PC-9 (cell line): ENCODE measurements at regions of chr9 and their contacts with region 1.

Region 1: GRCh38 chr9:124174433-124174832 is 83.3 kb upstream of the NEK6 start:
- DNase-seq: no peak
- H3K4me3 ChIP-seq: no peak overlapping the region
- H3K27ac ChIP-seq: no peak overlapping the region
- H3K4me1 ChIP-seq: no peaks in the 10 kb centered on the region
- H3K27me3 ChIP-seq: peaks cover 14% of the 10 kb centered on the region; the same call in 1 of the 2 replicates
- CTCF ChIP-seq: no peak

Region 2: DNA sequence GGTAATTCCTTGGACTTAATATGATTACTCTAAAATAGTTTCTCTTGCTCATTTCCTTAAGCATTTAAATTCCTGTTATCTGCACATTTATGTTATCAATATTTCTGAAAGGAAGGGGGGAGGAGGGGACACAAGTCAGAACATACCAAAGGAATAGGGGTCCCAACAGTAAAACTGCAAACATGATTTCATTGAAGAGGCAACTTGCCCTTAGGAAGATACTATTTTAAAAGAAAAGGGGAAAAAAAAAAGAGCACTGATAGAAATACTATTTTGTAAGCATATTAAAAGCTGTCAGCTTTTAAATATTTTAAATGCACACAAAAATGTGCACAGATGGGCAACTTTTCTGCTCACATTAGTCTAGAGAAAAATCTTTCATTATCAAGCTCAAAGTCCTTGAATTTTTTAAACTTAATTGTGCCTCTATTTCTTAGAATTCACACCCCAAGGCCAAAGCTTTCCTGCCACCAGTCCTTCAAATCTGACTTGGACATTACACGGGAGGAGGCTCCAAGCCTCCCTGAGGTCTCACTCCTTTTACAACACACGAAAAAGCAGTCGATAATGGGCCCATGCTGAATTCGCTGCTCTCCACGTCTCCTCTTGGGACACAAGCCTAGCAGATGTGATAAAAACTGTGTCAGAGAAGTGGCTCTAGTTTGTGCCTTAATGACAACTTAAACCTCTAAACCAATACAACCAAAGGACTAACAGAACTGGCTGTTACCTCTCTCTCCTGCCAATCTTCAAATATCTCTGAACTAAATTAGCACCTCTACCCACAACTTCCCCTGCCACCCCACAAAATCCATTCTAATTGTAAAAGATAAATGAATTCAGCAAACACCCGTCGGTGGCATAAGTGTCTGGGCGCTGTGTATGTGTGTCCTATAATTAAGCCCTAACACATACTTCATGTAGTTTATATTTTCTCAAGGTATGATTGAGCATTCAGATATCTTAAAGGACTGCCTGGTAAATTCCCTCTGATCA is 398.8 kb before region 1 on chr9:
- CTCF ChIA-PET with region 1: no interaction called
- POLR2A ChIA-PET with region 1: interaction called, 10 read pairs
- intact Hi-C with region 1: no loop called
- DNase-seq: no peak
- H3K4me3 ChIP-seq: no peak overlapping the region
- H3K27ac ChIP-seq: no peak overlapping the region
- H3K4me1 ChIP-seq: no peaks in the 10 kb centered on the region
- H3K27me3 ChIP-seq: no peaks in the 10 kb centered on the region
- CTCF ChIP-seq: no peak

Region 3: DNA sequence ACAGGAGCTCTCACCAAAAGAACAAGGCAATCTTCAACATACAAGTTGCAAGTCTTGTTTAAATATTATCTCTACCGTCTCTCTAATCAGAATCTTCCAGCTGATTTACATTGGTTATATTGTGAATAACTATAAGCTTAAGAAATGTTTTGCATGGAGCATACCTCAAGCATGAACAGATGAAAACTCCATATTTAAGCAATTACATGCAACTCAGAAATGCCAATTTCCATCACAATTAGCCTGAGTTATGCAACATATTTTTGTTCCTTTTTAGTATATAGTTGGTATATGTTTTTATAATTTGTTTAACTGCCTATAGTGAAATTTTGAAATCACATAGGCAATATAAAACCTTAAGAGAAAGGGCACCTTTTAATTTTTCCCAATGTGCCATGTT is 387.0 kb before region 1 on chr9:
- CTCF ChIA-PET with region 1: no interaction called
- POLR2A ChIA-PET with region 1: no interaction called
- intact Hi-C with region 1: no loop called
- DNase-seq: no peak
- H3K4me3 ChIP-seq: no peak overlapping the region
- H3K27ac ChIP-seq: no peak overlapping the region
- H3K4me1 ChIP-seq: no peaks in the 10 kb centered on the region
- H3K27me3 ChIP-seq: no peaks in the 10 kb centered on the region
- CTCF ChIP-seq: no peak